Activated CD8-positive, alpha-beta T cell treated with anti-CD3 and anti-CD28 coated beads, Interleukin-2, amount 10 ng/mL, durations not matched to agents 7 days and 5 days (primary cell): ENCODE measurements at regions of chr7 and their contacts with region 1.

Region 1: DNA sequence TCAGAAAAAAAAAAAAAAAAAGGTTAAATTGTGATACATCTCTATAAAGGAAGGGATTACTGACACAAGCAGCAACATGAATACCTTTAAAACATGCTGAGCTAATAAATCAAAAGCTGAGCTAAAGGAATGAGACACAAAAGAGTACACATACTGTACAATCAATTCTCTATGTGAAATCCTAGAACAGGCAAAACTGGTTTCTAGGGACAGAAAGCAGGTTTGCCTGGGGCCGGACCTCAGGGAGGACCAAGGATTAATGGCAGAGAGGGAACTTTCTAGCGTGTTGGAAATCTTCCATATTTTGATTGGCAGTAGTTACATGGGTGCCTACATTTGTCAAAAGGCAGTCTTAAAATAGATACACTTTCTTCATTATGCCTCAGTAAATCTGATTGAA is 52.5 kb downstream of the KLRG2 start:
- DNase-seq: no peak
- ATAC-seq: no peak
- H3K4me3 Mint-ChIP-seq: no peak overlapping the region
- H3K27ac Mint-ChIP-seq: no peak overlapping the region
- H3K4me1 Mint-ChIP-seq: peaks cover 8% of the 10 kb centered on the region
- H3K27me3 Mint-ChIP-seq: no peaks in the 10 kb centered on the region

Region 2: DNA sequence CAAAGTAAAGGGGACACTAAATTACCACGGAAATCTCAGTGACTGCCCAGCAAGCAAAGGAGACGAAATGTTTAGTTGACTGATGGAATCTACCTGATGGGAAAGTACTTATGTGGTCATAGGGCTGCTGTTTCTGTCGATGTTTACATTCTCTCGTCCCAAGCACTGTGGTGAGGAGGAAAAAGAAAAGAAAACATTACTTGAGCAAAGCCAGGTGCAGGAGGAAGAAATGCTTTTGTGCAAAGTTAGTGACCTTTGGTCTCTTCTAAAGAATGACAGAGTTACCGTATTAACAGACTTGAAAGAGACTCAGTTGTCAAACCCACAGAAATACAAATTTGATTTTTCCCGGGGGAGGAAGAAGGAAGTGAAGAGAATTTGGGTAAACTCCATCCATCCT is 133.2 kb before region 1 on chr7:
- CTCF ChIA-PET with region 1: no interaction called
- POLR2A ChIA-PET with region 1: no interaction called
- DNase-seq: no peak
- ATAC-seq: no peak
- H3K4me3 Mint-ChIP-seq: no peak overlapping the region
- H3K27ac Mint-ChIP-seq: no peak overlapping the region
- H3K4me1 Mint-ChIP-seq: no peaks in the 10 kb centered on the region
- H3K27me3 Mint-ChIP-seq: no peaks in the 10 kb centered on the region

Region 3: GRCh38 chr7:139370301-139370942 is 60.6 kb before region 1 on chr7:
- CTCF ChIA-PET with region 1: interaction called, 12 read pairs
- POLR2A ChIA-PET with region 1: no interaction called
- DNase-seq: no peak
- ATAC-seq: no peak
- H3K4me3 Mint-ChIP-seq: no peak overlapping the region
- H3K27ac Mint-ChIP-seq: peak overlapping the region; percentile 36
- H3K4me1 Mint-ChIP-seq: peaks cover 45% of the 10 kb centered on the region
- H3K27me3 Mint-ChIP-seq: no peaks in the 10 kb centered on the region

Region 4: DNA sequence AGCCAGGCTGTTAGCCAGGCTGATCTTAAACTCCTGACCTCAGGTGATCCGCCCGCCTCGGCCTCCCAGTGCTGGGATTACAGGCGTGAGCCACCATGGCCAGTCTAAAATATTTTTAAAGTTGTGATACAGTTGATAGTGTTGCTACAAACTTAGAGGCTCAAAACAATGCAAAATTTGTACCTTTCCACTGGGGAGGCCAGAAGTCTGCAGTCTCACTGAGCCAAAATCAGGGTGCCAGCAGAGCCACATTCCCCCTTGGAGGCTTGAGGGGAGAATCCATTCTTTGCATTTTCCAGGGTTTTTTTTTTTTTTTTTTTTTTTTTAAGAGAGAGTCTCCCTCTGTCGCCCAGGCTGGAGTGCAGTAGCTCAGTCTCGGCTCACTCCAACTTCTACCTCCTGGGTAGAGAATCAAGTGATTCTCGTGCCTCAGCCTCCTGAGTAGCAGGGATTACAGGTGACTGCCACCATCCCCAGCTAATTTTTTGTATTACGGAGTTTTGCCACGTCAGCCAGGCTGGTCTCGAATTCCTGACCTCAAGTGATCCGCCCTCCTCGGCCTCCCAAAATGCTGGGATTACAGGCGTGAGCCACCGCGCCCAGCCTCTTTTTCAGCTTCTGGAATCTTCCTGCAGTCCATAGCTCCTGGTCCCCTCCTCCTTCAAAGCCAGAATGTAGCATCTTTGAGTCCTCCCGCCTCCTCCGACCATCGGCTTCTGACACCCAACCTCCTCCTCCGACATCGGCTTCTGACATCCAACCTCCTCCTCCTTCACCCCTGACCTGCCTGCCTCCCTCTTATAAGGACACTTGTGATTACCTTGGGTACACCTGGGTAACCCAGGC is 15.2 kb after region 1 on chr7:
- CTCF ChIA-PET with region 1: interaction called, 11 read pairs
- POLR2A ChIA-PET with region 1: no interaction called
- DNase-seq: no peak
- ATAC-seq: no peak
- H3K4me3 Mint-ChIP-seq: no peak overlapping the region
- H3K27ac Mint-ChIP-seq: no peak overlapping the region
- H3K4me1 Mint-ChIP-seq: no peaks in the 10 kb centered on the region
- H3K27me3 Mint-ChIP-seq: peaks cover 2% of the 10 kb centered on the region

Region 5: GRCh38 chr7:139482662-139483469 is 51.9 kb after region 1 on chr7:
- CTCF ChIA-PET with region 1: interaction called, 12 read pairs
- POLR2A ChIA-PET with region 1: no interaction called
- DNase-seq: peak; percentile 30
- ATAC-seq: peak; percentile 61
- H3K4me3 Mint-ChIP-seq: peak overlapping the region; percentile 46
- H3K27ac Mint-ChIP-seq: no peak overlapping the region
- H3K4me1 Mint-ChIP-seq: peaks cover 3% of the 10 kb centered on the region
- H3K27me3 Mint-ChIP-seq: peaks cover 45% of the 10 kb centered on the region

Region 6: DNA sequence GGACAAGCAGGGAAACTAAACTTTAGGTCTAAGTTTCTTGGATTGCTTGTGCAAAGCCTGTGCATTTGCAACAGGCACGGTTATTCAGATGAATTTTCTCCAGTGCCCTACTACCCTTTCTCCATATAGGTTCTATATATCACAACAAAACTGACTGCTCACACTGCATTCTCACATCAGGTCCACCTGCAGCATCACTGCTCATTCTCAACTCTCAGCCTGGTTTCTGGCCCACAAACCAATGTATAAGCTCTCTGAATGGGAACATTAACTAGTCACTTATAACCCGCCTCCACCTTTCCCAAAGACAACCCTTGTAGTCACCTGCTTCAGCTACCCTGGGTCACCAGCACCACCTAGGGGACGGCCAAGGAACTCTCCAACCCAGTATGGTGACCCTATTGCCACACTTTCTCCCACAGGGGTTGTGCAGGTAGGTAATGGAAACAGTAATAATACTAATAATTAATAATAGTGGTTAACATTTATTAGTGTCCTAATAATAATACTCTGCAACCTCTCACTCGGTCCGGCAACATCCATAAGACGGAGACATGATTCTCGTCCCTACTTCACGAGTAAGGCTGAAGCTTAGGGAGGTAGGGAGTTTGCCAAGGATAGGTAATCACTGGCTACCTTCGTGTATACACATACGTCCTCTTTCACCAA is 189.8 kb after region 1 on chr7:
- CTCF ChIA-PET with region 1: interaction called, 12 read pairs
- POLR2A ChIA-PET with region 1: no interaction called
- DNase-seq: peak; percentile 72
- ATAC-seq: peak; percentile 78
- H3K4me3 Mint-ChIP-seq: no peak overlapping the region
- H3K27ac Mint-ChIP-seq: no peak overlapping the region
- H3K4me1 Mint-ChIP-seq: peaks cover 31% of the 10 kb centered on the region
- H3K27me3 Mint-ChIP-seq: no peaks in the 10 kb centered on the region